Activated CD8-positive, alpha-beta memory T cell treated with anti-CD3 and anti-CD28 coated beads, Interleukin-2, amount 10 ng/mL, durations not matched to agents 7 days and 5 days (primary cell): ENCODE measurements at regions of chr14 and their contacts with region 1.

Region 1: GRCh38 chr14:70640938-70641547 is 673 bp upstream of the TTC9 start:
- DNase-seq: peak; percentile 66
- ATAC-seq: peak; percentile 69
- H3K4me3 Mint-ChIP-seq: peak overlapping the region; percentile 94
- H3K27ac Mint-ChIP-seq: peak overlapping the region; percentile 84
- H3K4me1 Mint-ChIP-seq: peaks cover 49% of the 10 kb centered on the region
- H3K27me3 Mint-ChIP-seq: peaks cover 5% of the 10 kb centered on the region

Region 2: DNA sequence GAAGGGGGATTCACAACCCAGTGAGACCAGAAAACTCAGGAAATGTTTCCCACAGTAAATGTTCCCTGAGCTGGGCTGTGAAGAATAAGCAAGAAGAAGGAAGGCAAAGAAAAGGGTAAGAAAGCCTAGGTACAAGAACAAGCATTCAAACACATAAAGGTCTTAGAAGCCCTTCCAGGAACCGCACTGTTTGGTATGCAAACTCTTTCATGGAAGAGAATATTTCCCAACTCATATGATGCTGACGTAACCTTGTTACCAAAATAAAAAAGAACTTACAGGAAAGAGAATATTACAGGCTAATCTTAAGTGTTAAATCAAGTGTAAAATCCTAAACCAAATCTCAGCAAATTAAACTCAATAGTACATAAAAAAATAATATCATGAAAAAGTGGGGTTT is 64.2 kb before region 1 on chr14:
- CTCF ChIA-PET with region 1: no interaction called
- DNase-seq: no peak
- ATAC-seq: no peak
- H3K4me3 Mint-ChIP-seq: no peak overlapping the region
- H3K27ac Mint-ChIP-seq: no peak overlapping the region
- H3K4me1 Mint-ChIP-seq: no peaks in the 10 kb centered on the region
- H3K27me3 Mint-ChIP-seq: no peaks in the 10 kb centered on the region

Region 3: GRCh38 chr14:70655110-70655826 is 14.2 kb after region 1 on chr14:
- CTCF ChIA-PET with region 1: interaction called, 13 read pairs
- DNase-seq: peak; percentile 90
- ATAC-seq: peak; percentile 88
- H3K4me3 Mint-ChIP-seq: peak overlapping the region; percentile 73
- H3K27ac Mint-ChIP-seq: peak overlapping the region; percentile 97
- H3K4me1 Mint-ChIP-seq: peaks cover 82% of the 10 kb centered on the region
- H3K27me3 Mint-ChIP-seq: no peaks in the 10 kb centered on the region